Posterior cingulate gyrus (tissue), 11 donors: ENCODE measurements at regions of chr5 and their contacts with region 1.

Region 1: GRCh38 chr5:138337685-138338410 is at the start of gene FAM53C:
- DNase-seq: peak; percentile 84 to 99 (median 91)

Region 2: DNA sequence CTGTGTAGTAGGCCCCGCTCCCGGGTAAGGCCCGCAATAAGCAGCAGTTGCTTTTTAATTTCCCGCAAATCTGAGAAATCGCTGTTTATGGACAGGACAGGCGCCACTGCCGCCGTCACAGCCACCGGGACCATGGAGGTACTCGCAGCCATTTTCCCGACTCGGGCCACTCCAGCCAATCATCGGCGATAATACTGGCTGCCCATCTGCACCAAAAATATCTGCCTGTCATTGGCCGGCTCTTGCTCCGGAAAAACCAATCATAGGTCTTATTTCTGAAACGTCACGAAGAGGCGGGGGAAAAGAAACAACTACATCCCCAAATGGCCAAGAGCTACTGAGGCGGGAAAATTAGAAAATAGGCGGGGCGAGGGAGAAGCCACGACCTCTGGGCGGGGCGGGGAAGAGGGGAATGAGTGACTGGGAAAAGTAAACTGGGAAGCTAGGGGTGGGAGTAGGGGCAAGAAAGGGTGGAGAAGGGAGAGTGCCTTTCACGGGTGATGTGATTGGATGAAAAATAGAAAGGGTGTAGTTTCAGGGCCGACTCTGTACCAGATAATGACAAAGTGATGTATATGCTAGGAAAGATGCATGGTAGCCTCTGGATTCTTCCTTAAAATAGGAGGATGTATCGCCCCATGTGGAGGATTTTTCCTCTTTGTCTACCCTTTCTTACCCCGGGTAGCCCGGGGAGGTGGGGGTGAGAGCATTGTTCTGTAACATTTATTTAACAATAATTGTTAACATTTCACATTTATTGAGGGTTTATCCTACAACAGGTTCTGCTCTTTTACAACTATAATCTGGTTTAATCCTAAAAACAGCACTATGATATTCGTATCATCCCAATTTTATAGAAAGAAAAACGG is 124.5 kb before region 1 on chr5 and contains the start of gene CDC23:
- intact Hi-C with region 1: loop called (anchors 5 kb)
- DNase-seq: peak; percentile 84 to 98 (median 90)

Region 3: DNA sequence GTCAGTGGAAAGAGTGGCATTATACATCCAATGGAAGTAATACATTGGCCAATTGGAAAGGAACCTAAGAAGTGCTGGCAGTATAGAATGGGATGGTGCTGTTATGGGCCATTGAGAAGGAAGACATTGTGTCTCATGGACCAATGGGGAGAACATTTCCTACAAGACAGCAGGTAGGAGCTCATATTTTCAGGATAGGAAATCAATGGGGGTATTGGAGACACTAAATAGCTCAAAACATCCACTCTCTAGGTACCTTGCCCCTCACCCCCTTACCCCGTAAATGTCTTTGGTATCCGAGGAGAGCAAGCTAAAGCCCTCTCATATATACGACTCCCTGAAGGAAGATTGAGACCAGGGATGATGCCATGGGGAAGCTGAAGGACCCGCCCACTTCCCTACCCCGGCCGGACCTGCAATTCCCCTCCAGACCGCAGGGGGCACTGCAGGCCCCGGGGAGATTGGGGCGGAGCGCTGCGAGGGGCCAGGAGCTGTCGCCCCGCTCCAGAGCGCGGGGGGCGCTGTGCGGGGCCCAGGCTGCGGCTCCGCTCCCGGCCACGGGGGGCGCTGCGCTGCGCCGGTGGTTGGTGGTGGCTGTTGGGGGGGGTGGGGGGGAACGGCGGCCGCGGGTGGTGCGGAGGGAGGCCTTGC is 14.3 kb after region 1 on chr5 and contains the start of gene KDM3B:
- intact Hi-C with region 1: loop called (anchors 2 kb)
- DNase-seq: peak; percentile 54 to 97 (median 72)

Region 4: DNA sequence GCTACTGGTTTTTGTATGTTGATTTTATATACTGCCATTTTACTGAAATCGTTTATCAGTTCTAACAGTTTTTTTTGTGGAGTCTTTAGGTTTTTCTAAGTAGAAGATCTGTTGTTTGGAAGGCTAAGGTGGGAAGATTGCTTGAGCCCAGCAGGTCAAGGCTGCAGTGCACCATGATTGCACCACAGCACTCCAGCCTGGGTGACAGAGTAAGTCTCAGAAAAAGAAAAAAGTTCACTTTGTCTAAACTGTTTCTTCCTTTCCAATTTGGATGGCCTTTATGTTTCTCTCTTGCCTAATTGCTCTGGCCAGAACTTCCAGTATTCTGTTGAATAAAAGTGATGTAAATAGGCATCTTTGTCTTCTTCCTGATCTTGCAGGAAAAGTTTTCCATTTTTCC is 661.8 kb after region 1 on chr5:
- intact Hi-C with region 1: no loop called
- DNase-seq: no peak